ENCODE measurements at regions of chr9 and their contacts with region 1.

Region 1: DNA sequence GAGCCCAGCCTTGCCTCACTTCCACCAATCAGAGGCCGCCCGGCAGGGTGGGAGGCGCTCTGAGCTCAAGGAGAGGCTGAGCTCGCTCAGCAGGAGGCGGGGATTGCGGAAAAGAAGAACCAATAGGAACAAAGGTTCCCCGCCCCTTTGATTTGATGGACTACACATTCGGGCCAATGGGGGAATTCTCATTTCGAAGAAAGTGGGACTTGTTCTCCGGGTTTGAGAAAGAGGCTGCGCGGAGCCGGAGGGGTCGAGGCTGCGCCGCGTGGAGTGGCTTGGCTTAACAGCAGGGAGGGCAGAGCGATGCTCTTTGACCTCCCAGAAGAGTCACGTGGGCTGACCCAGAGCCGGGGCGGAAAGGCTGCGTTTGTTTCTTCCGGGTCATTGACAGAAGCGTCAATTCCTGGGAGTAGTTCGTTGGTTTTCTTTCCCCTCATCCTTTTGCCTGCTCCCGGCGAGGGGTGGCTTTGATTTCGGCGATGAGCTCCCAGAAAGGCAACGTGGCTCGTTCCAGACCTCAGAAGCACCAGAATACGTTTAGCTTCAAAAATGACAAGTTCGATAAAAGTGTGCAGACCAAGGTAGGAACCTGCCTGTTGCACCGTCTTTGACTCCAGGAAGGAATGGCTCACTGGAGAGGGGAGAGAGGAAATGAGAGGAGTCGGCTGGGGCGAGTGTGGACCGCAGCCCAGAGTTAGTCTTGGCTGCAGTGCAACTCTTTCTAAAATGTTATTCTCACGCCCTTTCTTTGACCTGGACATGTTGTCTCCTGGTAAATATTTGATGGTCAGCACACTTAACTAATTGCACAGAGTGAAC is at the start of gene C9orf85:
- DNase-seq: peak; percentile 84 to 98 (median 95)
- ATAC-seq: peak; percentile 96
- H3K4me3 ChIP-seq: peak within 1 kb of the TSS; percentile 83
- H3K4me3 Mint-ChIP-seq: peak within 1 kb of the TSS; percentile 95 to 100 (median 100)
- H3K27ac ChIP-seq: peak within 1 kb of the TSS; percentile 74
- H3K27ac Mint-ChIP-seq: peak within 1 kb of the TSS; percentile 90 to 99 (median 95)
- H3K4me1 ChIP-seq: peaks cover 15 to 22% of the 10 kb centered on the region in 2 donors
- H3K4me1 Mint-ChIP-seq: peaks cover 47 to 80% (median 67%) of the 10 kb centered on the region in 7 donors
- H3K27me3 ChIP-seq: peaks cover 0 to 3% of the 10 kb centered on the region in 2 donors
- H3K27me3 Mint-ChIP-seq: no peaks in the 10 kb centered on the region
- total RNA-seq, gene C9orf85: 4.8 to 10.3 (median 8.6) TPM

Region 2: GRCh38 chr9:71858812-71859211 is 52.7 kb before region 1 on chr9:
- CTCF ChIA-PET with region 1: no interaction called
- POLR2A ChIA-PET with region 1: no interaction called
- intact Hi-C with region 1: loop called in 1 of 2 experiments (anchors 5 kb)
- DNase-seq: no peak
- ATAC-seq: no peak
- H3K4me3 ChIP-seq: no peak overlapping the region
- H3K4me3 Mint-ChIP-seq: peak overlapping the region in 1 of 10 donors; percentile 2
- H3K27ac ChIP-seq: no peak overlapping the region
- H3K27ac Mint-ChIP-seq: peak overlapping the region in 1 of 9 donors; percentile 3
- H3K4me1 ChIP-seq: no peaks in the 10 kb centered on the region
- H3K4me1 Mint-ChIP-seq: peaks cover 0 to 15% (median 0%) of the 10 kb centered on the region in 7 donors
- H3K27me3 ChIP-seq: no peaks in the 10 kb centered on the region
- H3K27me3 Mint-ChIP-seq: no peaks in the 10 kb centered on the region

Region 3: DNA sequence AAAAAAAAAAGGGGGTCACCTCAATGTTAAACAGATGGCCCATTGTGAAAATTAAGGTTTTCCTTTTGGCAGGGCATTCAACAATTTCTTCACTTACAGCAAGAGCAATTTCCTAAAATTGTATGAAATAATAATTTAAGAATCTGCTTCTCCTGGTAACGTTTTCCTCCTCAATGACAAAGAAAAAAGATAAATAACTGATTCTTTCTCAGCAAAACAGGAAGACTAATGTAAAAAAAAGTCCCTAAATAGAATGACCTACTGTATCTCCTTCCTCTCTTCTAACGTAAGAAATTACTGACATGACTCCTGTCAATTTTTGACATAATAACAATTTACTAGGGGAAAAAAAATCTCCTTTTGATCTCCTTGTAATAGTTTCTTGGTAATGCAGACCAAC is 26.0 kb before region 1 on chr9:
- CTCF ChIA-PET with region 1: no interaction called
- POLR2A ChIA-PET with region 1: no interaction called
- intact Hi-C with region 1: no loop called
- DNase-seq: no peak
- ATAC-seq: no peak
- H3K4me3 ChIP-seq: no peak overlapping the region
- H3K4me3 Mint-ChIP-seq: peak overlapping the region in 2 of 10 donors; percentile 14 to 24
- H3K27ac ChIP-seq: no peak overlapping the region
- H3K27ac Mint-ChIP-seq: peak overlapping the region in 6 of 9 donors; percentile 29 to 67 (median 44)
- H3K4me1 ChIP-seq: peaks cover 0 to 16% of the 10 kb centered on the region in 2 donors
- H3K4me1 Mint-ChIP-seq: peaks cover 28 to 58% (median 47%) of the 10 kb centered on the region in 7 donors
- H3K27me3 ChIP-seq: no peaks in the 10 kb centered on the region
- H3K27me3 Mint-ChIP-seq: no peaks in the 10 kb centered on the region